ENCODE measurements at regions of chr4 and their contacts with region 1.

Region 1: GRCh38 chr4:98467627-98468072 is 190.8 kb downstream of the TSPAN5 start:
- DNase-seq: peak; percentile 39 to 86 (median 80)
- H3K4me3 ChIP-seq: peak overlapping the region in 58 of 59 donors; percentile 2 to 70 (median 51)
- H3K27ac ChIP-seq: peak overlapping the region in 42 of 59 donors; percentile 6 to 85 (median 66)
- H3K27me3 ChIP-seq: no peaks in the 10 kb centered on the region
- CTCF ChIP-seq: peak; percentile 54 to 94 (median 84)

Region 2: DNA sequence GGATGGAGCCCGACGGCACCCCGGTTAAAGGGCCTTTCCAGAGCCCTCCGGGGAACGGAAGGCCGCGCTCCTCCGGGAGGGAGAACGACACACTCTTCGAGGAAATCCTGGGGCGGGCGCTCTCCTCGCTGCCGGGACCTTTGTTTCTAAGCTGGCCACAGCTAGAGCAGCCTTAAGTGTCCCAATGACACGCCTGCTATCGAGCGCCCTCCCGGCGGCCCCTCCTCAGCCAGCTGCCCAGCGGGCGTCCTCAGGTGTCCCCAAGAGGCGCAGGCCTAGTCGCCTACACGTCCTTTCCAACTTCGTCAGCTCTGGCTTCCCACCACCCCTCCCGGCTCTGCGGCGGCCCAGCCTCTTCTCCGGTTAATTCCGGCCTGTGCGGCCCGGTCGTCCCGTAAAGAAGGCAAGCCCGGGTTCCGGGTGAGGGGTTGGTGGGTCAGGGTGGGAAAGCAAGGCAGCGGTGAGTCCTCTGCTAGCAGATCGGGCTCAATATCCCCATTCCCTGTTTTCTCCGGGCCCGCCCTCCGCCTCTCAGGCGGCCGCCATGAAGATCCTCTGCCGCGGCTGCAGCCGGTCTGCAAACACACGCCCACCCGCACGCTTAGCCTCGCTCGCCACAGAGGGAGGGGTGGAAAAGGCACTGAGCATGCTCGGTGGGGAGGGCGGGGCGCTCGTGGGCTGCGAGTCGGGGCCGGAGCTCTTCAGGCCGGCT is 206.9 kb before region 1 on chr4:
- intact Hi-C with region 1: loop called (anchors 5 to 10 kb)
- DNase-seq: peak; percentile 84 to 96 (median 92)
- H3K4me3 ChIP-seq: peak overlapping the region; percentile 67 to 96 (median 88)
- H3K27ac ChIP-seq: peak overlapping the region; percentile 89 to 99 (median 98)
- H3K27me3 ChIP-seq: no peaks in the 10 kb centered on the region
- CTCF ChIP-seq: peak in 12 of 56 donors; percentile 1 to 19 (median 10)

Region 3: GRCh38 chr4:98626350-98626749 is 158.7 kb after region 1 on chr4:
- intact Hi-C with region 1: loop called in 1 of 2 experiments (anchors 5 kb)
- DNase-seq: peak in 2 of 10 donors; percentile 50 to 62
- H3K4me3 ChIP-seq: no peak overlapping the region
- H3K27ac ChIP-seq: peak overlapping the region; percentile 56 to 93 (median 83)
- H3K27me3 ChIP-seq: no peaks in the 10 kb centered on the region
- CTCF ChIP-seq: no peak

Region 4: GRCh38 chr4:98939892-98940298 is 472.2 kb after region 1 on chr4:
- intact Hi-C with region 1: loop called in 1 of 2 experiments (anchors 5 kb)
- DNase-seq: no peak
- H3K4me3 ChIP-seq: no peak overlapping the region
- H3K27ac ChIP-seq: no peak overlapping the region
- H3K27me3 ChIP-seq: no peaks in the 10 kb centered on the region
- CTCF ChIP-seq: peak; percentile 49 to 83 (median 70)